Heart left ventricle (tissue), 16 donors: ENCODE measurements at regions of chrX and their contacts with region 1.

Region 1: GRCh38 chrX:45070116-45071007 is 130.3 kb downstream of the DIPK2B start:
- DNase-seq: no peak
- ATAC-seq: peak in 2 of 4 donors; percentile 48 to 62
- H3K4me3 ChIP-seq: no peak overlapping the region
- H3K27ac ChIP-seq: peak overlapping the region in 1 of 12 donors; percentile 58
- H3K4me1 ChIP-seq: peaks cover 0 to 56% (median 5%) of the 10 kb centered on the region in 12 donors
- H3K27me3 ChIP-seq: no peaks in the 10 kb centered on the region
- CTCF ChIP-seq: peak; percentile 26 to 72 (median 60)
- POLR2A ChIP-seq: no peak

Region 2: DNA sequence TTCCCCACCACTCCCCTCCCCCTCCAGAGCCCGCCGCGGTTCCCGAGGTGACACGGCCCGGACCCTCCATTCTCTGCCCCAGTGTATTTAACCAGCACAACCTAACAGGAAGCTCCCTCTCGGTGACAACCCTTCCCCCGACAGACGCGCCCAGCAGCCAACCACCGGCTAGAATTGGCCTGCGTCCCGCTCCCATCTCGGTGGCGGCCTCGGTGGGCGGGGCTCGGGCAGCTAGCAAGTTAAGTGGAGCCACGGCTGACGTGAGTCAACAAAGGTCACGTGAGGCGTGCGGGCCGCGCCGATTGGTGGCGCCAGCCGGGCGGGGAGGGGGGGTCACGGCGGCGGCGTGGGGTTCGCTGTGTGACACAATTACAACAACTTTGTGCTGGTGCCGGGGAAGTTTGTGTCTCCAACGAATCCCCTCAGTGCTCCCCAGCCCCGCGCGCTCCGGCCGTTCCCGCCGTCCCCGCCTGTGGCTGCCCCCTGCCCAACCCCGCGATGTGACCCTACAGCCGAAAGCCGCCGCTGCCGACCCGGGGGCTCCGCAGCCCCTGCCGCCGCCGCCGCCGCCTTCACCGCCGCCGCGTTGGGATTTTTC is 197.4 kb before region 1 on chrX and contains the start of gene KDM6A:
- intact Hi-C with region 1: loop called in 9 of 10 experiments (anchors 2 to 10 kb)
- DNase-seq: peak; percentile 97 to 100 (median 97)
- ATAC-seq: peak; percentile 92 to 98 (median 94)
- H3K4me3 ChIP-seq: peak within 1 kb of the TSS; percentile 55 to 94 (median 86)
- H3K27ac ChIP-seq: peak within 1 kb of the TSS; percentile 93 to 100 (median 98)
- H3K4me1 ChIP-seq: peaks cover 0 to 44% (median 11%) of the 10 kb centered on the region in 12 donors
- H3K27me3 ChIP-seq: no peaks in the 10 kb centered on the region
- CTCF ChIP-seq: no peak
- POLR2A ChIP-seq: peak in 1 of 2 donors; percentile 84
- total RNA-seq, gene KDM6A: 10.1 to 27.8 (median 14.3) TPM

Region 3: DNA sequence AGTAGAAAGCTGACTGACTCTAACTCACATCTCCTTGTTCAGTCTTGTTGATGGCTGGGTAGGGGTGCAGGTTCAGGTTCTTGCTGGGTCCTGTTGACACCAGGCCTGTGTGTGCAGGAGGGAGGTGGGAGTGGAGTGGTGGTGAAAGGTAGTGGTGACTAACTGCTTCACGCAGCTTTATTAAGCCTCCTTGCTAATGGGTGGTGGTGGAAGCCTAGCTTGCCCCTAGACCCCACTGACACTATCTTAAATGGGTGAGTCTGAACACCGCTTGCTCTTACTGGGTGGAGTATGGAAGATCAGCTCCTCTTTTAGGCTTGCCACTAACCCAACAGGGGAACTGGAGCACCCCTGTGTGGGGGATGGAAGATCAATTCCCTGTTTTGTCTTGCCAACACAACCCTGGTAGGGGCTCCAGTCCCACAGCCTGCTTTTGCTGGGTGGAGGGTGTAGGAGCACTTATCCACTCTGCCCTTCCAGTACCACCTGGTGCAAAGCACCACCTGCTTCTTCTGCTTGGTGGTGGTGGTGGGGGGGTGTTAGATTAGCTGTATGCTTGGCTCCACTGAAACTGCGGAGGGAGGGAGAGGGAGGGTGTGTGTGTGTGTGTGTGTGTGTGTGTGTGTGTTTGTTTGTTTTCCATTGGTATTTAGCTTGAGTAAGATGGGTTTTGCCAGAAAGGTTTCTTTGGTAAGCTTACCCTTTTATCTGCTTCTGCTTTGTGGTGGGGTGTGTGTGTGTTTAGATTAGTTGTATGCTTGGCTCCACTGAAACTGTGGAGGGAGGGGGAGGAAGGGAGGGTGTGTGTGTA is 171.7 kb before region 1 on chrX:
- intact Hi-C with region 1: loop called in 1 of 10 experiments (anchors 10 kb)
- DNase-seq: no peak
- ATAC-seq: peak in 2 of 4 donors; percentile 37 to 55
- H3K4me3 ChIP-seq: no peak overlapping the region
- H3K27ac ChIP-seq: no peak overlapping the region
- H3K4me1 ChIP-seq: peaks cover 0 to 42% (median 11%) of the 10 kb centered on the region in 12 donors
- H3K27me3 ChIP-seq: no peaks in the 10 kb centered on the region
- CTCF ChIP-seq: no peak
- POLR2A ChIP-seq: no peak

Region 4: DNA sequence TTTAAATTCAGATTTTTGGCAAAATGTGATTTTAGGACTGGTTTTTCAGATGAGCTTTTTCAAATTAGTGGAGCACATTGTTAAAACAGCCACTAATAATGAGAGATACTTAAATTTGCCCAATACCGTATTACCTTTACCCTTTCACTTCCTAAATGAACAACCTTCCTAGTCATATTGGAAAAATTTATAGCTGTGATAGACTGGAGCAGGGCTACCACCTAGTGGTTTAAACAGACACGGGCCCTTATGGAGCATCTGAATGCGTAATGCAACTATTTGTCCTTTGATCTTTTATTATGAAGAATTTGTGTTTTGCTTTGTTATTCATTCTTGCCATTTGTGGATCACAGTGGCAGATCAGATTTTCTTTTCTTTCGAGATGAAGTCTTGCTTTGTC is 124.6 kb before region 1 on chrX:
- intact Hi-C with region 1: no loop called
- DNase-seq: no peak
- ATAC-seq: no peak
- H3K4me3 ChIP-seq: no peak overlapping the region
- H3K27ac ChIP-seq: no peak overlapping the region
- H3K4me1 ChIP-seq: peaks cover 0 to 32% (median 3%) of the 10 kb centered on the region in 12 donors
- H3K27me3 ChIP-seq: no peaks in the 10 kb centered on the region
- CTCF ChIP-seq: peak in 5 of 12 donors; percentile 14 to 49 (median 17)
- POLR2A ChIP-seq: no peak

Region 5: GRCh38 chrX:45126158-45126557 is 55.8 kb after region 1 on chrX:
- intact Hi-C with region 1: loop called in 1 of 10 experiments (anchors 10 kb)
- DNase-seq: no peak
- ATAC-seq: no peak
- H3K4me3 ChIP-seq: no peak overlapping the region
- H3K27ac ChIP-seq: no peak overlapping the region
- H3K4me1 ChIP-seq: no peaks in the 10 kb centered on the region
- H3K27me3 ChIP-seq: peaks cover 0 to 2% (median 0%) of the 10 kb centered on the region in 9 donors
- CTCF ChIP-seq: no peak
- POLR2A ChIP-seq: no peak

Region 6: DNA sequence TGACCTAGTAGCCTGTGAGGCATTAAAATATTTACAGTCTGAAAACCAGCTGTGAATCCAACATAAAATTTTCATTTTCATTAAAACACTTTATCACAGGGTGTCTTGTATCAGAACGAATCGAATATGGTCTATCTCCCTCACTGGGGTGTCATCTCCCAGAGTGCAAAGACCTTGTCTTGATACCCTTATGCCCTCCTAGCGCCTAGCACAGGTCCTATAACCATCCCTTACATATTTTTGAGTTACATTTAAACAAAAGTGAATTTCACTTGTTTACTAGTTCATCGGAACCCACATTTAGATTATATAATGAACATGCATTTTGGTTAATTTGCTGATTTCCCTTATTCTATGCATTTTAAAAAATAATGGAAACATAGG is 116.3 kb after region 1 on chrX:
- intact Hi-C with region 1: loop called in 1 of 10 experiments (anchors 10 kb)
- DNase-seq: no peak
- ATAC-seq: peak in 1 of 4 donors; percentile 14
- H3K4me3 ChIP-seq: peak overlapping the region in 8 of 12 donors; percentile 38 to 57 (median 46)
- H3K27ac ChIP-seq: peak overlapping the region in 5 of 12 donors; percentile 24 to 55 (median 42)
- H3K4me1 ChIP-seq: peaks cover 0 to 15% (median 4%) of the 10 kb centered on the region in 12 donors
- H3K27me3 ChIP-seq: peaks cover 0 to 14% (median 0%) of the 10 kb centered on the region in 9 donors
- CTCF ChIP-seq: no peak
- POLR2A ChIP-seq: no peak